ENCODE measurements at regions of chr6 and their contacts with region 1.

Region 1: DNA sequence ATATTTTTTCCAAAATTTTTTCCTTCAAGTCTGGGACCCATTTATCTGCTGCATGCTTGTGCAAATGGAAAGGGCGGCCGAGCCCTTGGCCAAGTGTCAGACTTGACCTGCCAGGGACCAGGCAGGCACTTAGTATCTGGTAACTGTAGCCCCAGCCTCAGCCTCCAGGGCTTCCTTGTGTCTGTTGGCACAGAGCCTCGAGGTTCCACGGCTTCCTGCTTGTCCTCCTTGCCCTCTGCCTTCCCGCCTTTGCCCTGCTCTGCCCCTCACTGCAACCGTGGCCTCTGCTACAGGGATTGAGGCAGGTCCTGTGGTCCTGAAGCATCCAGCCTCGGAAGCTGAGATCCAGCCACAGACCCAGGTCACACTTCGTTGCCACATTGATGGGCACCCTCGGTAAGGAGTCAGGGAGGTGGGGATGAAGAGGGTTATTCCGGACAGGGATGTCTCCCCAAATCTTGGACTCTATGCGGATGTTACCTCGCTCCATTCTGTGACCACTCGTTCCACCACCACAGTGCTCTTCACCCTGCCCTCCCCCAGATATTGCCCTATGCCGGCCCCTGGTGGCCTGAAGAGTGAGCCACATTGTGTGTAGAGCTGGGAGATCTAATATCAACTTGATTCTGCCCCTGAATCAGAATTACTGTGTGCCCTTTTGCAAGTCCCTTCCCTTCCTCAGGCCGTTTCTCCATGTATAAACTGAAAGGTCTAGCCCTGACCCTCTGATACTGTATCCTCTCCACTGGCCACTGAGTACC is 41.5 kb upstream of the SRF start:
- DNase-seq: no peak
- ATAC-seq: peak in 1 of 2 donors; percentile 55
- H3K4me3 ChIP-seq: no peak overlapping the region
- H3K27ac ChIP-seq: no peak overlapping the region
- H3K4me1 ChIP-seq: no peaks in the 10 kb centered on the region
- H3K27me3 ChIP-seq: no peaks in the 10 kb centered on the region
- CTCF ChIP-seq: peak in 3 of 5 experiments; percentile 20 to 32 (median 31)
- POLR2A ChIP-seq: no peak

Region 2: GRCh38 chr6:42909835-42910234 is 219.8 kb before region 1 on chr6:
- in situ Hi-C with region 1: no loop called
- intact Hi-C with region 1: no loop called
- DNase-seq: no peak
- ATAC-seq: no peak
- H3K4me3 ChIP-seq: no peak overlapping the region
- H3K27ac ChIP-seq: no peak overlapping the region
- H3K4me1 ChIP-seq: peaks cover 0 to 2% of the 10 kb centered on the region in 2 donors
- H3K27me3 ChIP-seq: peaks cover 11 to 19% (median 15%) of the 10 kb centered on the region in 3 donors
- CTCF ChIP-seq: no peak
- POLR2A ChIP-seq: no peak

Region 3: DNA sequence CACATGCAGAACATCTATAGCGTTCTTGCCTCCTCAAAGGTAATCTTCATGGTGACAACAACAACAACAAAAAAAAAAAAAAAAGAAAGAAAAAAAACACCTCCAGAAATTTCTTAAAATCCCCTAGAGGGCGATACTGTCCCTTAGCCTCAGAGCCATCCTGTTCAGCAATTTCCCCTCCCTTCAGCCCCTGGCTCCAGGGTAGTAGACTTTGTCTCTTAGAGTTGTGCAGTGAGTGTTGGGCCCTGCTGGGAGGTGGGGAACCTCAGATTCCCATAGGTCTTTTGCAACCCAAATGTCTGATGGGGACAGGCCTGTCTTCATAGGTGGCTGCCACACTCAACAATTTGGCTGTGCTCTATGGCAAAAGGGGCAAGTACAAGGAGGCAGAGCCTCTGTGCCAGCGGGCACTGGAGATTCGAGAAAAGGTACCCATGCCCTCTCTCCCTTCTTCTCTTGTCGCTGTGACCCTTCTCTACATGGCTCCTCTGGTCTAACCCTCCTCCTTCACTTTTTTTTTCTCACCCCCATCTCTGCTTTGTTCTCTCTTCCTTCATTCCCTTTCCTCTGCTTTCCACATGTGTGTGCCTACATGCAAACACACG is 59.5 kb before region 1 on chr6:
- in situ Hi-C with region 1: no loop called
- intact Hi-C with region 1: loop called (anchors 5 kb)
- DNase-seq: no peak
- ATAC-seq: no peak
- H3K4me3 ChIP-seq: no peak overlapping the region
- H3K27ac ChIP-seq: no peak overlapping the region
- H3K4me1 ChIP-seq: no peaks in the 10 kb centered on the region
- H3K27me3 ChIP-seq: no peaks in the 10 kb centered on the region
- CTCF ChIP-seq: peak in 1 of 5 experiments; percentile 34
- POLR2A ChIP-seq: no peak

Region 4: DNA sequence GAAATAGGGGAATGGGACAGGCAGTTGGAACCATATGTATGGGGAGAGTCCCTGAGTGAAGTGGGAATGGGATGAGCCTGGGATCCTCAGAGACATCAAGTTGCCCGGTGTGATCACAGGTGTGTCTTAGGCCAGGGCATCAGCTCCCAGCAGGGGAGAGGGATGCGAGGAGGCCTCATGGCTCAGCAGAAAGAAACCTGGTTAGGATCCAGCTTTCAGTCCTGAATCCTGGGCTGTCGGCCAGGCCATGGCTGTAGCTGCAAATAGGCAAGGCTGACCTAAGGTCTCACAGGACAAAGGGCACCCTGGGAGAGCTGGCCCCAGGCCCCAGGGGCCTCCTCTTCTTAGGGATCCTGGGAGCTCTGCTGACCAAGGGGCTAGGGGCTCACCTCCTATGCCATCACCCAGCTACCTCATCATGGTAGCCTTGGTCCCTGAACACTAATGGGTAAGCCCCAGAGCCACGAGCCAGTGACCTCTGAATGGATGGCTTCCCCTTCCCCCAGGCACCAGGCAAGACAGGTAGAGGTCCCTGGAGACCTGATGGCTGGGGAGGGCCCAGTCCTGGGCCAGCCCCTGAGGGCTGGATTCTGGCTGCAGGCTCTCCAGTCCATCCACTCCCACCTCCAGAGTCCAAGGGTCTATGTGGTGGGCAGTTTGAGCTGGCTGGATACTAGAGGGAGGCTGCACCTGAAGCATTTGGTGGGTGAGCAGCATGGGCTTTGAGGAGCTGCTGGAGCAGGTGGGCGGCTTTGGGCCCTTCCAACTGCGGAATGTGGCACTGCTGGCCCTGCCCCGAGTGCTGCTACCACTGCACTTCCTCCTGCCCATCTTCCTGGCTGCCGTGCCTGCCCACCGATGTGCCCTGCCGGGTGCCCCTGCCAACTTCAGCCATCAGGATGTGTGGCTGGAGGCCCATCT is 168.3 kb after region 1 on chr6 and contains the start of gene SLC22A7:
- in situ Hi-C with region 1: no loop called
- intact Hi-C with region 1: no loop called
- DNase-seq: no peak
- ATAC-seq: no peak
- H3K4me3 ChIP-seq: no peak within 1 kb of the TSS
- H3K27ac ChIP-seq: no peak within 1 kb of the TSS
- H3K4me1 ChIP-seq: no peaks in the 10 kb centered on the region
- H3K27me3 ChIP-seq: peaks cover 5 to 9% (median 6%) of the 10 kb centered on the region in 3 donors
- CTCF ChIP-seq: no peak
- POLR2A ChIP-seq: no peak
- total RNA-seq, gene SLC22A7: 0.42 TPM in 1 of 4 donors, not detected in the others

Region 5: GRCh38 chr6:43339168-43339567 is 209.6 kb after region 1 on chr6:
- in situ Hi-C with region 1: no loop called
- intact Hi-C with region 1: no loop called
- DNase-seq: no peak
- ATAC-seq: no peak
- H3K4me3 ChIP-seq: no peak overlapping the region
- H3K27ac ChIP-seq: no peak overlapping the region
- H3K4me1 ChIP-seq: peaks cover 3 to 5% of the 10 kb centered on the region in 2 donors
- H3K27me3 ChIP-seq: no peaks in the 10 kb centered on the region
- CTCF ChIP-seq: no peak
- POLR2A ChIP-seq: no peak